Right lobe of liver (tissue), 6 donors: ENCODE measurements at regions of chr17 and their contacts with region 1.

Region 1: DNA sequence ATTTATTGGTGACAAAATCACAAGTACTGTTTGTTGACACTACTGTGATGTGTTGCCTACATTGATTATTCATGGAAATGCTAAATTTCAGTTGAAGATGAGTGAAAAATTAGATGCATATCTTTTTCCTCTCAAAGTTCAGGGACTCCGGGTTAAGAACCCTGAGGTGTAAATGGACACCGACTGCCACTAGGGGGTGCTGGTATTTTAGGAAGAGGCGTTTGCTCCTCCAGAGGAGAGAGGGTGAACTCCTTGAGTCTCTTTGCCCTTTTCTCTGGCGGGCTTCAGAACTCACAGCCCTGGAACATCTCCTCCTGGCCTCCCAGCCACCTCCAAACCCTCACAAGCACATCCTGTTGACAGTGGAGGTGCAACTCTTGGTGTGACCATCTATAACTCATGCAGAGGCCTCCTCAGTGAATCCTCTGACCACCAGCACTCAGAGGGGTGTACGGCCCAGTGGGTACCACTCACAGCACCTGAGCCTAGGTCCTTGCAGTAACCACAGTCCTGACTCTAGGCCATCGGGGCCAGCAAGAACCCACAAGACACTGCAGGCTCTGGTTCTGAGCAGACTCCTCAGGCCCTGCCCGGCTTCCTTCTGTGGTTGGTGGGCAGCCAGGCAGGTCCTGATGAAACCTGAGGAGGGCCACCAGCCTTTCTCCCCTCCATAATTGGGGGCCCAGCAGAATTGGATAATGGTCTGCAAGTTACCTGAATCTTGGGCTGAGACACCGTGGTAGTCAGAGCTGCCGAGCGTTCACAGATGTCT is 26.2 kb upstream of the PIK3R5 start:
- DNase-seq: peak in 2 of 3 donors; percentile 46 to 57
- ATAC-seq: peak; percentile 68 to 79 (median 73)
- H3K4me3 ChIP-seq: no peak overlapping the region
- H3K27ac ChIP-seq: no peak overlapping the region
- H3K4me1 ChIP-seq: peaks cover 0 to 9% (median 0%) of the 10 kb centered on the region in 4 donors
- H3K27me3 ChIP-seq: no peaks in the 10 kb centered on the region
- CTCF ChIP-seq: peak; percentile 62 to 84 (median 82)
- POLR2A ChIP-seq: no peak

Region 2: GRCh38 chr17:9050801-9051401 is 59.2 kb after region 1 on chr17:
- intact Hi-C with region 1: no loop called
- DNase-seq: no peak
- ATAC-seq: peak in 1 of 4 donors; percentile 28
- H3K4me3 ChIP-seq: no peak overlapping the region
- H3K27ac ChIP-seq: no peak overlapping the region
- H3K4me1 ChIP-seq: peaks cover 0 to 24% (median 9%) of the 10 kb centered on the region in 4 donors
- H3K27me3 ChIP-seq: no peaks in the 10 kb centered on the region
- CTCF ChIP-seq: no peak
- POLR2A ChIP-seq: no peak

Region 3: GRCh38 chr17:9291912-9292560 is 300.3 kb after region 1 on chr17:
- intact Hi-C with region 1: loop called in 1 of 2 experiments (anchors 10 kb)
- DNase-seq: peak in 2 of 3 donors; percentile 39 to 54
- ATAC-seq: peak; percentile 93 to 96 (median 94)
- H3K4me3 ChIP-seq: no peak overlapping the region
- H3K27ac ChIP-seq: no peak overlapping the region
- H3K4me1 ChIP-seq: peaks cover 0 to 5% (median 0%) of the 10 kb centered on the region in 4 donors
- H3K27me3 ChIP-seq: no peaks in the 10 kb centered on the region
- CTCF ChIP-seq: peak; percentile 57 to 78 (median 76)
- POLR2A ChIP-seq: no peak

Region 4: DNA sequence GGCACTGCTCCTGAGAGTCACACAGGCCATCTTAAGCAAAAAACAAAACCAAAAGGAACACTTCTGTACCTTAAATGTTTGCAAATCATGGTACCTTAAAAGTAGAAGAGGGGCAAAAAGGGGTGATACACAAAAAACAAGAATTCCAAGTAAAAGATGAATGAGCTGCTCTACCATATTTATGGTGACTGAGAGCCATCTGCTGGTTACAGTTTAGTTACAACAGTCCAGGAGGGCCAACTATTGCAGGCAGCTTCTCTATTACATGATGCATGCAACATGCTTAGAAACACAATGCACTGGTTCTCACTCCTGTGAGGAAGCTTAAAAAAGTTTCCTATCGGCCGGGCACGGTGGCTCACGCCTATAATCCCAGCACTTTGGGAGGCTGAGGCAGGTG is 530.4 kb after region 1 on chr17:
- intact Hi-C with region 1: loop called in 1 of 2 experiments (anchors 10 kb)
- DNase-seq: no peak
- ATAC-seq: peak; percentile 53 to 75 (median 68)
- H3K4me3 ChIP-seq: no peak overlapping the region
- H3K27ac ChIP-seq: no peak overlapping the region
- H3K4me1 ChIP-seq: no peaks in the 10 kb centered on the region
- H3K27me3 ChIP-seq: no peaks in the 10 kb centered on the region
- CTCF ChIP-seq: peak; percentile 39 to 60 (median 49)
- POLR2A ChIP-seq: no peak